ENCODE measurements at regions of chr11 and their contacts with region 1.

Region 1: DNA sequence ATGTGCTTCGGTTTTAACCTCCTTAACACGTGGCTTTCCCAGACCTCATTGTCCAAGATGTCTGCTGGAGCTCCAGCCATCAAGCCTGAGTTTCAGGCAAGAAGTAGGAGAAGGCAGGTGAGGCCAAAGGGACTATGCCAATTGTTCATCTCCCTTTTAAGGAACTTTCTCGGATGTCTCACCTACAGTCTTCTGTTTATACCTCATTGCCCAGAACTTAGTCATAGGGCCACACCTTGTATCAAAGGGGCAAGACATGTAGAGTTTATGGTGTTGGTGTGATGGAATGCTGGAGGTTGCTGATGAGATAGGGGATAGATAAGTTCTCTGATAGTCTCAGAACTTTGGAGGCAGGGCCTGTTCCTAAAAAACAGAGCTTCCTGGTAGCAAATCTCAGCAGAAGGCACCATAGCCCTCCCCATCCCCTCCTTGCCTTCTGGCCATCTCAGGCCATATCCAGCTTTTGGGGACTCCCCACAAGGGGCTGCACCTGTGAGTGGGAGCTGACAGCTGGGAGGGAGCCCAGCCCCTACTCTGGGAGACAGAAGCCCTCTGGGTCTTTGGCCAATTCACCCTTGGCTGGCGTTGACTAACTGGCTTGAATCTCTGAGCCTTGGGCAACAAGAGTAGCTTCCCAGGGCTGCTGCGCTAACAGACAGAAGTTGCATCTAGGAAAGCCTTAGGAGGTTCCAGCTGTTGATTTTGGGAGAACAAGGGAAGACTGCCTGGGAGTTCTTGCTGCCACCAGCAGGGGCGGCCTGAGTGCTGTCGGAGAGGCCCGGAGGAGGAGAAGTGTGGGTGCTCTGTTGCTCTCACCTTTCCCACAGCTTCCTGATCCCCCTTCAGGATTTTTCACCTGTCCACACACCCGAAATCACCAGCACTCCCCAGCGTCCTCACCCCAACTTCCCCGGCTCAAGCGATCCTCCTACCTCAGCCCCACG is 149.8 kb upstream of the THY1 start:
- DNase-seq: peak; percentile 34 to 97
- H3K4me3 ChIP-seq: no peak overlapping the region
- H3K27ac ChIP-seq: peak overlapping the region; percentile 65
- H3K4me1 ChIP-seq: peaks cover 14% of the 10 kb centered on the region
- H3K27me3 ChIP-seq: no peaks in the 10 kb centered on the region
- CTCF ChIP-seq: 0 out of 2 replicates have a peak, but pooled peaks have one; percentile 38

Region 2: DNA sequence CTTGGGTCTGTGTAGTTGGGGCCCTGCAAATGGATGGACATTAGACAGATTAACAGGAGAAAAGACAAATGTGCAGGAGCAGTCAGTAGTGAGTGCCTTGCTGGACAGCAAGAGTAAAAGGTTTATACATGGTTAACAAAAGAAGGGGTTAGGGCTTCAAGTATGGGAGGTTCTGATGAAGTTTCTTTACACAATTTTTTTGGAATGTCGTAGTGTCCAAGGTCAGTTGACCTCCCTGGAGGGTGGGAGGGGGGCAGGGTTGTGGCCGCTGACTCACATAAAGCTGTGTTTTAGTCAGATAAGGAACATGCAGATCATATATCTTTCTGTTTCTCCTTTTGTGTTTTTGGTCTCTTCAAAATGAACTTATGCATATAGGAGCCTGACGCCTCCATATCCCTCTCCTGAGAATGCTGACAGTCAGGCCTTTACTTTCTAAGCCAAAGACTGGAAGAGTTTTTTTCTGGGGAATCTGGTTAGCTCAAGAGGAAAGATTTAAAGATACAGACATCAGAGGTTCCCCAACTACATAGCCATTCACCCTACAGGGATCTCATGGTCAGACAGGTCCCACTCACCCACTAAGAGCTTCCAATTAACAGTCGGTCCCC is 22.0 kb after region 1 on chr11:
- CTCF ChIA-PET with region 1: no interaction called
- POLR2A ChIA-PET with region 1: interaction called, 3 read pairs
- intact Hi-C with region 1: loop called (anchors 2 kb)
- DNase-seq: peak; percentile 63 to 86
- H3K4me3 ChIP-seq: no peak overlapping the region
- H3K27ac ChIP-seq: peak overlapping the region; percentile 78
- H3K4me1 ChIP-seq: peaks cover 57% of the 10 kb centered on the region
- H3K27me3 ChIP-seq: no peaks in the 10 kb centered on the region
- CTCF ChIP-seq: no peak